PC-3 (cell line): ENCODE measurements at regions of chr7 and their contacts with region 1.

Region 1: GRCh38 chr7:99374103-99375064 is at the start of gene ARPC1B:
- DNase-seq: peak; percentile 68
- ATAC-seq: peak; percentile 72
- H3K4me3 ChIP-seq: peak within 1 kb of the TSS; percentile 87
- H3K27ac ChIP-seq: peak within 1 kb of the TSS; percentile 58
- H3K4me1 ChIP-seq: 0 out of 2 replicates have a peak, but pooled peaks cover under 1% of the 10 kb centered on the region
- H3K27me3 ChIP-seq: no peaks in the 10 kb centered on the region
- CTCF ChIP-seq: no peak
- total RNA-seq, gene ARPC1B: 358 and 381 TPM in 2 replicates

Region 2: DNA sequence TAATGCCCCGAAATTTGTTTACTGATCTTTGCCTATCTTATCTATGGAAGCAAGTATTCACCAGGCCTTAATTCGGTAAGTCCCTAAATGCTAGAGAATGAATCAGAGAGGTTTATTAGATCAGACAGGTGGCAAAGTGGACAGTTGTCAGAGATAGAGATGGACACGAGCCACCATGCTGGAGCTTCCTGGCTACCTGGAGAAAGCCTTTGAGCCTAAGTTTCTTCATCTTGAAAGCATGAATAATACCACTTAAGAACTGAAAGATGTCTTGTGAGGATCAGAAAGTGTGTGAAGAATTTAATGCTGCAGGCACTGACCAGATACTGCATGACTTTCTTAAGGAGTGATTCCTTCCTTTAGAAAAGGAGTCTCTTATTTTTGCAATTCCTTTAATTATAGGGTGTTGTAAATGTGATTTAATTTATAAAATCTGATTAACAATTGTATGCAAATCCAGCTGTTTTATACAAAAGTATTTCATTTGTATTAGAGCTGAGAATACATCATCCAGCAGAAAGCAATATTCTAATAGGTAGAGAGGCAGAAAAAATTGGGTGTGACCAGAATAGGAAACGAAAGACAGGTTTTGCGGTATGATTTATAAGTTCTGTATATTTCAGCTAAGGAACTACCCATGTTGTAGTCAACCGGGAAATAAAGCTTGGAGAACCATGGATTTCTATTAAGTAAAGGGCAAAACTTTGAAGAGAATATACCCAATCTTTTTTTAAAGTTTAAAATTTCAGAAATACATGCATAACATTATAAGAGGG is 313.2 kb before region 1 on chr7:
- CTCF ChIA-PET with region 1: no interaction called
- POLR2A ChIA-PET with region 1: no interaction called
- intact Hi-C with region 1: no loop called
- DNase-seq: no peak
- ATAC-seq: no peak
- H3K4me3 ChIP-seq: no peak overlapping the region
- H3K27ac ChIP-seq: no peak overlapping the region
- H3K4me1 ChIP-seq: no peaks in the 10 kb centered on the region
- H3K27me3 ChIP-seq: no peaks in the 10 kb centered on the region
- CTCF ChIP-seq: no peak

Region 3: GRCh38 chr7:99408379-99409191 is 34.2 kb after region 1 on chr7 and contains the starts of genes BUD31 and PDAP1:
- CTCF ChIA-PET with region 1: no interaction called
- POLR2A ChIA-PET with region 1: no interaction called
- intact Hi-C with region 1: no loop called
- DNase-seq: peak; percentile 87
- ATAC-seq: peak; percentile 82
- H3K4me3 ChIP-seq: peak within 1 kb of the TSS; percentile 90
- H3K27ac ChIP-seq: peak within 1 kb of the TSS; percentile 96
- H3K4me1 ChIP-seq: peaks cover 22% of the 10 kb centered on the region
- H3K27me3 ChIP-seq: no peaks in the 10 kb centered on the region
- CTCF ChIP-seq: no peak
- total RNA-seq, gene BUD31: 120 and 144 TPM in 2 replicates
- total RNA-seq, gene PDAP1: 58.6 and 84.7 TPM in 2 replicates

Region 4: GRCh38 chr7:99679032-99679399 is 304.6 kb after region 1 on chr7:
- CTCF ChIA-PET with region 1: no interaction called
- POLR2A ChIA-PET with region 1: no interaction called
- intact Hi-C with region 1: no loop called
- DNase-seq: peak; percentile 75
- ATAC-seq: peak; percentile 99
- H3K4me3 ChIP-seq: no peak overlapping the region
- H3K27ac ChIP-seq: no peak overlapping the region
- H3K4me1 ChIP-seq: peaks cover 11% of the 10 kb centered on the region
- H3K27me3 ChIP-seq: no peaks in the 10 kb centered on the region
- CTCF ChIP-seq: no peak

Region 5: DNA sequence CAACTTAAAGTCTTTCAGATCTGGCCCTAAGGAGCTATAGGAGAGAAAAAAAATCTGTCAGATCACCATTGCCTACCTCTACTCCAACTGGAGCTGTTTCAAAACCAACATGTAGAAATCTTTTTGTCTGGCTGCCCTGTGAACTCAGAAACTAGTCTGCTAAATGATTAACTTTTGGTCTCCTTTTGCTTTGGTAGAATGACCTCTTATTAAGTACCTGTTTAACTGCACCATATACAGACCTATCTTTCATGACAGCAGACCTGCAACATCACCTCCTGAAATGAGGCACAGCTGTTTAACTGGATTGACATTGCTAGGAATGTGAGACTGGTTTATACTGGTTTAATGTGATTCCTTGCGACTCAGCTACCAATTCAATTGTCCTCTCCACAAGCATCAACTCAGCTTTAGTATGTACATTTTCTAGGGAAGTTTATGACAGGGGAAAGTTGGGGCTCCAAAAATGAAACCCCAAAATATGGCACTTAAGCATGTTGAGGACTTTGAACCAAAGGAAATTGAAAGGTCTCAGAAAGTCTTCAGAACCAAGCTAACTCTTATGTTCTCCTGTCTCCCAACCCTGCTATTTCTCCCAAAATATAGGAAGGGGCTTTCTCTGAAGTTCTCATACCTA is 455.3 kb after region 1 on chr7:
- CTCF ChIA-PET with region 1: no interaction called
- POLR2A ChIA-PET with region 1: no interaction called
- intact Hi-C with region 1: no loop called
- DNase-seq: no peak
- ATAC-seq: no peak
- H3K4me3 ChIP-seq: no peak overlapping the region
- H3K27ac ChIP-seq: no peak overlapping the region
- H3K4me1 ChIP-seq: no peaks in the 10 kb centered on the region
- H3K27me3 ChIP-seq: peaks cover 36% of the 10 kb centered on the region; the same call in 1 of the 2 replicates
- CTCF ChIP-seq: no peak

Region 6: DNA sequence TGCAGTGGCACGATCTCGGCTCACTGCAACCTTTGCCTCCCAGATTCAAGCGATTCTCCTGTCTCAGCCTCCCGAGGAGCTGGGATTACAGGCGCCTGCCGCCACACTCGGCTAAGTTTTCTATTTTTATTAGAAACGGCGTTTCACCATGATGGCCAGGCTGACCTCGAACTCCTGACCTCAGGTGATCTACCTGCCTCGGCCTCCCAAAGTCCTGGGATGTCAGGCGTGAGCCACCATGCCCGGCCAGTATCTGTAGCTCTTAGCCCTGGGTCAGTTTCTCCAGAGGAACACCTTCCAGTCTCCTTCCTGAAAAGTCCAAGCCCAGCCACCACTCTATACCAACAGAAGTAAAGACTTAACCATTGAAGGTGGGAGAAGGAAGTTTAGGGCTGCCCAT is 625.9 kb after region 1 on chr7:
- CTCF ChIA-PET with region 1: interaction called, 10 read pairs
- POLR2A ChIA-PET with region 1: no interaction called
- intact Hi-C with region 1: no loop called
- DNase-seq: no peak
- ATAC-seq: no peak
- H3K4me3 ChIP-seq: no peak overlapping the region
- H3K27ac ChIP-seq: no peak overlapping the region
- H3K4me1 ChIP-seq: no peaks in the 10 kb centered on the region
- H3K27me3 ChIP-seq: no peaks in the 10 kb centered on the region
- CTCF ChIP-seq: no peak